Common myeloid progenitor, CD34-positive (primary cell): ENCODE measurements at regions of chr1 and their contacts with region 1.

Region 1: GRCh38 chr1:64147759-64148158 is 55.7 kb upstream of the UBE2U start:
- DNase-seq: no peak
- H3K4me3 ChIP-seq: no peak overlapping the region
- H3K27ac ChIP-seq: no peak overlapping the region
- H3K4me1 ChIP-seq: peaks cover 0 to 13% (median 5%) of the 10 kb centered on the region in 4 experiments
- H3K27me3 ChIP-seq: no peaks in the 10 kb centered on the region

Region 2: DNA sequence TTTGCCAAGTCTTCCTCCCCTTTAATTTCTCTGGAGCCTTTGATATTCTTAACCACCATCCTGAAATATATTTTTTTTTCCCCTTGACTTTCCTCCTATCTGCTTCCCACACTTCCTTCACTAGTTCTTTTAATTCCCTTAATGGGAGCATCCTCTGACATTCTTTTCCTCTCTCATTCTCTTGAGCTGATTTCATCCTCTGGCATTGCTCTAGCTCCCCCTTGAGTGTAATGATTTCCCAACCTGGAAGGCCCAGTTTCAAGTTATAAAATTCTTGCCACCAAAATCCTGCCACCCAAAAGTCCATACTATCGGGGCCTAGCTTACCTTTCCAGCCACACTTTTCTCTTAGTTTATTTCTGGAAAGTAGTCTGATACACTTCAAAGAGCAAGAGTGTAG is 16.2 kb after region 1 on chr1:
- CTCF ChIA-PET with region 1: interaction called, 11 read pairs
- POLR2A ChIA-PET with region 1: no interaction called
- DNase-seq: peak in 1 of 3 donors; percentile 8
- H3K4me3 ChIP-seq: no peak overlapping the region
- H3K27ac ChIP-seq: no peak overlapping the region
- H3K4me1 ChIP-seq: no peaks in the 10 kb centered on the region
- H3K27me3 ChIP-seq: no peaks in the 10 kb centered on the region